CD14-positive monocyte (primary cell): ENCODE measurements at regions of chr17 and their contacts with region 1.

Region 1: DNA sequence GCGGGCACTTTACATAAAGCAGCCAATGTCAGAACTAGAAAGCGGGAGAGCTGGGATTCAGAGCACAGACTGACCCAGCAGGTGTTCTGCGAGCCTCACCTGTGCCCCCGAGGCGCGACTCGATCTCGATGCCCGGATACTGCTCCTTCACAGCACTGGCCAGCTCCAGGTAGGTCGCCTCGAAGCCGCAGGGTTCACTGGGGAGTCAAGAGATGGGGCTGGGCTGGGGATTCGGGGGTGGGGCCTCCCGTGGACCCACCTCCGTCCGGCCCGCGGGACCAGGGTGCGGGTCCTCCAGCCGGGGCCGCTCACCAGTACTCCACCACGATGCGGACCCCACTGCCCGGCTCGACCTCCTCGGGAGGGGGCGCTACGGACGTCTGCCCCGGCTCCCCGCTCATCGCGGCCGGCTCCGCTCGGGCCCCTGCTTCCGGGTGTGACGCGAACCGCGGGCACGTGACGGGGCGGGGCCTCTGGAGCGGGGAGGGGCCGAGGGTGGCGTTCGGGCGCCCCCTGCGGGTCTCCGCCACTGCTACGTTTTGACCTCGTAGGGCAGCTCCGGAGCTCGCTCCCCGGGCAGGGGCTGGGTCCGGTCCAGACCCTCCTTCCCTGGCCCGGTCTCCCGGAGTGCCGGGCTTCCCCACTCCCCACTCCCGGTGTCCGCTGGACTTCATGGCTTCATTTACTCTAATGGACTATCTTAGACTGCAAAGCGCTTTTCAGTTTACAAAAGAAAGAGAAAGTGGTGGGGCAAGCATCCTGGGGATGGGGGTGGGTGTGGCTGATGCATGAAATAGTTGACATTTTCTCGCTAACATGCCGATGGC is at the start of gene MIEN1:
- DNase-seq: peak; percentile 83 to 88 (median 84)
- H3K4me3 ChIP-seq: peak within 1 kb of the TSS; percentile 69 to 95 (median 86)
- H3K4me3 Mint-ChIP-seq: peak within 1 kb of the TSS; percentile 84 to 90
- H3K27ac ChIP-seq: peak within 1 kb of the TSS; percentile 48 to 96
- H3K27ac Mint-ChIP-seq: peak within 1 kb of the TSS; percentile 87 to 94 (median 91)
- H3K4me1 ChIP-seq: peaks cover 9 to 13% of the 10 kb centered on the region in 2 donors
- H3K4me1 Mint-ChIP-seq: peaks cover 9% of the 10 kb centered on the region
- H3K27me3 ChIP-seq: peaks cover 0 to 5% of the 10 kb centered on the region in 2 donors
- H3K27me3 Mint-ChIP-seq: peaks cover 11 to 19% (median 17%) of the 10 kb centered on the region in 3 donors
- CTCF ChIP-seq: peak; percentile 97
- polyA plus RNA-seq, gene MIEN1: 61.7 to 141 (median 124) TPM

Region 2: DNA sequence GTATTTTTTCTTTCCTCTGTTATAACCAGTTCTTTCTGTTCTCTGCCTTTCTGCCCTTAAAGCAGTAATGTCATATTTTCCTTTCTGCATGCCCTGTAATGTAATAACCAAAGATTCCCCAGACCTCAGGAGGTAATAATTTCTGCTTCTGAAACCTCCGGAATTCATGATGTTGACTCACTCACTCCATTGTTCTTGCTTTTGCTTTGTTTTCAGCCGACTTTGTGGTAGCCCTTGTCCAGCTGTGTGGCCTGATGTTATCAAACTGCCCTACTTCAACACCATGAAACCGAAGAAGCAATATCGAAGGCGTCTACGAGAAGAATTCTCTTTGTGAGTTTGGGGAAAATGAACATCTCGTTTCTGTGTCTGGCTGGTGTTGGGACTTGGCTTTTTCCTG is 213.1 kb before region 1 on chr17:
- intact Hi-C with region 1: no loop called
- DNase-seq: no peak
- H3K4me3 ChIP-seq: no peak overlapping the region
- H3K4me3 Mint-ChIP-seq: no peak overlapping the region
- H3K27ac ChIP-seq: no peak overlapping the region
- H3K27ac Mint-ChIP-seq: peak overlapping the region in 1 of 7 donors; percentile 68
- H3K4me1 ChIP-seq: no peaks in the 10 kb centered on the region
- H3K4me1 Mint-ChIP-seq: no peaks in the 10 kb centered on the region
- H3K27me3 ChIP-seq: no peaks in the 10 kb centered on the region
- H3K27me3 Mint-ChIP-seq: peaks cover 0 to 2% (median 0%) of the 10 kb centered on the region in 3 donors
- CTCF ChIP-seq: no peak

Region 3: DNA sequence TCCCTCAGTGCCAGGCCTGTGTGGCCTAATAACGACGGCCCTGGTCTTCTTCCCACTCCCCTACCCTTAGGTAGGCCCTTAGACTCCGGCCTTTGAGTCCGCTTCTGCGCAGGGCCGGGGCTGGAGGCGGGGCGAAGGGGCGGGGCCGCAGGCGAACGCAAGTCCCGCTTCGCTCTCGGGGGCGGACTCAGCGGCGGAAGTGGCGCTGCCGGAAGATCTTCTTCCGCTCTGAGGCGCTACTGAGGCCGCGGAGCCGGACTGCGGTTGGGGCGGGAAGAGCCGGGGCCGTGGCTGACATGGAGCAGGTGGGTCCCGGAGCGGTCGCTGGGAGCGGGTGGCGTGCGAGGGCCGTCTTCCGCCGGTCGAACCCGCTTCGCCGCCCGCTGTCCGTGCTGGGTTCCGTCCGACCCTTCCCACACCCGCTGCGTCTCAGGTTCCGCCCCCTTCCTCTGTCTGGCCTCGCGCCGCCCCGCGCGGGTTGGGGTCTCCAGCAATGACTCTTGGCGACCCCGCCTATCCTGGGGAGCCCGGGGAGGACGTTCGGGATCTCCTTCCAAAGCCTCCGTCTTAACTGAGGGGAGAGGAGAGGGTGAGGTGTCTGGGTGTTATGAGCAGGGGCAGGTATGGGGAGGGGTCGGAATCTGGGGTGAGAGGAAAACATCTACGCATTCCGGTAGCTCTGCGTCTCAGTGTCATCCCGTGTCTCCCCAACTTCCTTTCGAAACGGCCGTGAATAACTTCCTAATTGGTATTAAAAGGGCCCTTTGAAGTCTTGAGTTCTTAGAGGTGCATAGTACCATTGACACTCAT is 93.2 kb before region 1 on chr17 and contains the start of gene STARD3:
- intact Hi-C with region 1: loop called in 1 of 2 experiments (anchors 5 kb)
- DNase-seq: peak; percentile 84 to 88 (median 85)
- H3K4me3 ChIP-seq: peak within 1 kb of the TSS; percentile 85 to 90 (median 87)
- H3K4me3 Mint-ChIP-seq: peak within 1 kb of the TSS; percentile 87 to 93
- H3K27ac ChIP-seq: peak within 1 kb of the TSS; percentile 71 to 90
- H3K27ac Mint-ChIP-seq: peak within 1 kb of the TSS; percentile 86 to 96 (median 93)
- H3K4me1 ChIP-seq: peaks cover 59 to 71% of the 10 kb centered on the region in 2 donors
- H3K4me1 Mint-ChIP-seq: peaks cover 64% of the 10 kb centered on the region
- H3K27me3 ChIP-seq: peaks cover 0 to 4% of the 10 kb centered on the region in 2 donors
- H3K27me3 Mint-ChIP-seq: peaks cover 4 to 8% (median 8%) of the 10 kb centered on the region in 3 donors
- CTCF ChIP-seq: no peak
- polyA plus RNA-seq, gene STARD3: 35.1 to 114 (median 45.3) TPM

Region 4: DNA sequence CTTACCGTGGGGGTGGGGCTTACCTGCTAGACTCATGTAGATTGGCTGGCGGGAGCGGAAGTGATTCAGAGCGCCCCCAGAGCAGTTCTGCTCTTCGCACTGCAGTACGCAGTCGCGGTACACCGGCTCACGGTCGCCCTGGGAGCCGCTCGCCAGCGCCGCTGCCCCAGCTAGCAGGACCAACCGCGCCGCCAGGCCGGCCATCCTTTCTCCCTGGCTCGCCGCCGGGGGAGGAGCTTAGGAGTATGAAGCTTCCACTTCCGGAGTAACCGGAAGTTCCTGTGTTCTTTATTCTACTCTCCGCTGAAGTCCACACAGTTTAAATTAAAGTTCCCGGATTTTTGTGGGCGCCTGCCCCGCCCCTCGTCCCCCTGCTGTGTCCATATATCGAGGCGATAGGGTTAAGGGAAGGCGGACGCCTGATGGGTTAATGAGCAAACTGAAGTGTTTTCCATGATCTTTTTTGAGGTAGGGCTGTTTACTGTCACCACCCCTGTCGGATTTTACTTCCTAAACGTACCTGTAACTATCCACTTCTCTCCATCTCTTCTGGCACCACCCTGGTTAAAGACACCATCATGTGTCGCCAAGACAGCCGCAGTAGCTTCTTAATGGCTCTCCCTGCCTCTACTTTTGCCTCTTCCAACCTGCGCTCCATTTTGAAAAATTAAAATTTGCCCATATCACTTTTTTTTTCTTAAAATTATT is 42.3 kb before region 1 on chr17 and contains the start of gene PGAP3:
- intact Hi-C with region 1: loop called in 1 of 2 experiments (anchors 5 kb)
- DNase-seq: peak; percentile 70 to 88 (median 86)
- H3K4me3 ChIP-seq: peak within 1 kb of the TSS; percentile 60 to 96 (median 82)
- H3K4me3 Mint-ChIP-seq: peak within 1 kb of the TSS; percentile 94 to 97
- H3K27ac ChIP-seq: peak within 1 kb of the TSS; percentile 78 to 79
- H3K27ac Mint-ChIP-seq: peak within 1 kb of the TSS; percentile 88 to 96 (median 94)
- H3K4me1 ChIP-seq: peaks cover 12 to 18% of the 10 kb centered on the region in 2 donors
- H3K4me1 Mint-ChIP-seq: peaks cover 17% of the 10 kb centered on the region
- H3K27me3 ChIP-seq: no peaks in the 10 kb centered on the region
- H3K27me3 Mint-ChIP-seq: peaks cover 2 to 9% (median 8%) of the 10 kb centered on the region in 3 donors
- CTCF ChIP-seq: no peak
- polyA plus RNA-seq, gene PGAP3: 8.3 to 19.3 (median 9.2) TPM

Region 5: DNA sequence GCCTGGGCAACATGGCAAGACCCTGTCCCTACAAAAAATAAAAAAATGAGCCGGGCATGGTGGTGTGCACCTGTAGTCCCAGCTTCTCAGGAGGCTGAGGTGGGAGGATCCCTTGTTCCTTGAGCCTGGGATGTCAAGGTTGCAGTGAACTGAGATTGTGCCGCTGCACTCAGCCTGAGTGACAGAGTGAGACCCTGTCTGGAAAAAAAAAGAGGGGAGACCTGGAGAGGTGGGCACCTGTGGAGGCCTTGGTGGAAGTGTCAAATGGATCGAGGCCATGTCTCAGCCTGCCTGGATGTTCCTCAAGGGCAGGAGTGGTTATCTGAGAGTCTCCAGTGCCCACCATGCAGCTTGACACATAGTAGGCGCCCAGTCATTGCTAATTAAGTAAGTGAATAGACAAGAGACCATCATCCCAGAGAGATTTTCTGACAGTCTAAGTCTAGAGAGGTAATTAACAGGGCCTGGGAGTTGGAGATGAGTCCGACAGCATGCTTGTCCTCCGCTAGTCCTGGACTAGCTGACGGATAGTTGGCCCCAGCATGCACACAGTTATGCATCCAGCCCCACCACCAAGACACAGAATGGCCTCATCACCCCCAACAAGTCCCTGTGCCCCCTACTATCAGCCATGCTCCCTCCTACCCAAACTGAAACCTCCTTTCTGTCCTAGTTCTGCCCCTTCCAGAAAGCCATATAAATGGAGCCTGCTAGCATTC is 17.3 kb after region 1 on chr17:
- intact Hi-C with region 1: loop called in 1 of 2 experiments (anchors 2 kb)
- DNase-seq: no peak
- H3K4me3 ChIP-seq: no peak overlapping the region
- H3K4me3 Mint-ChIP-seq: no peak overlapping the region
- H3K27ac ChIP-seq: no peak overlapping the region
- H3K27ac Mint-ChIP-seq: no peak overlapping the region
- H3K4me1 ChIP-seq: no peaks in the 10 kb centered on the region
- H3K4me1 Mint-ChIP-seq: no peaks in the 10 kb centered on the region
- H3K27me3 ChIP-seq: peaks cover 0 to 6% of the 10 kb centered on the region in 2 donors
- H3K27me3 Mint-ChIP-seq: peaks cover 12 to 41% (median 28%) of the 10 kb centered on the region in 3 donors
- CTCF ChIP-seq: no peak